A673 (cell line): ENCODE measurements at regions of chr1 and their contacts with region 1.

Region 1: DNA sequence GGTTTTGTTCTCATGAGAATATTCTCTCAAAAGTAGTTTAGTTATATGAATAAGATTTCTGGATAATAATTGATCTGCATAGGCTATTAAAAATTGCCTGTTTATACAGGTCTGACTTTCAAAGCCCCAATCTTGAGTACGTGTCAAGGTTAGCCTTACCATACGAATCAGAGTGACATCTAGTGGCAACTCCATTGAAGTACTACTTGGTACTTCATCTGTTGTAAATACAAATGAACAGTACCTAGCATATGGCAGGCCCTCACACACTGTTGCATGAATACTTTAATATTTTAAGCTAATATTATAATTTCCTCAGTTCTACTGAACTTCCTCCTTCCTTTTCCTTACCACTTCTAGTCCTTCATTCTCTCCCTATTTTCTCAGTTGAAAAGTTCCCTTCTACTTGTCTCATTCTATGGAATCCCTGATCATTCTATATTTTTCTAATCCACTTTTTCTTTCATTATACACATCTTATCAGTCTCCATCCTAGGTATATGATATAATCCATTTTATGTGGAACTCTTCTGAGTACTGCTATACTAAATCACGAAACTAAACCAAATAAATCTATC is 101.2 kb downstream of the AKT3 start:
- DNase-seq: peak; percentile 53
- H3K4me3 ChIP-seq: no peak overlapping the region
- H3K27ac ChIP-seq: no peak overlapping the region
- H3K4me1 ChIP-seq: no peaks in the 10 kb centered on the region
- H3K27me3 ChIP-seq: no peaks in the 10 kb centered on the region
- CTCF ChIP-seq: peak; percentile 59

Region 2: GRCh38 chr1:243343970-243344937 is 404.5 kb before region 1 on chr1:
- CTCF ChIA-PET with region 1: no interaction called
- POLR2A ChIA-PET with region 1: no interaction called
- intact Hi-C with region 1: loop called (anchors 5 kb)
- DNase-seq: peak; percentile 42
- H3K4me3 ChIP-seq: no peak overlapping the region
- H3K27ac ChIP-seq: no peak overlapping the region
- H3K4me1 ChIP-seq: no peaks in the 10 kb centered on the region
- H3K27me3 ChIP-seq: no peaks in the 10 kb centered on the region
- CTCF ChIP-seq: peak; percentile 59

Region 3: DNA sequence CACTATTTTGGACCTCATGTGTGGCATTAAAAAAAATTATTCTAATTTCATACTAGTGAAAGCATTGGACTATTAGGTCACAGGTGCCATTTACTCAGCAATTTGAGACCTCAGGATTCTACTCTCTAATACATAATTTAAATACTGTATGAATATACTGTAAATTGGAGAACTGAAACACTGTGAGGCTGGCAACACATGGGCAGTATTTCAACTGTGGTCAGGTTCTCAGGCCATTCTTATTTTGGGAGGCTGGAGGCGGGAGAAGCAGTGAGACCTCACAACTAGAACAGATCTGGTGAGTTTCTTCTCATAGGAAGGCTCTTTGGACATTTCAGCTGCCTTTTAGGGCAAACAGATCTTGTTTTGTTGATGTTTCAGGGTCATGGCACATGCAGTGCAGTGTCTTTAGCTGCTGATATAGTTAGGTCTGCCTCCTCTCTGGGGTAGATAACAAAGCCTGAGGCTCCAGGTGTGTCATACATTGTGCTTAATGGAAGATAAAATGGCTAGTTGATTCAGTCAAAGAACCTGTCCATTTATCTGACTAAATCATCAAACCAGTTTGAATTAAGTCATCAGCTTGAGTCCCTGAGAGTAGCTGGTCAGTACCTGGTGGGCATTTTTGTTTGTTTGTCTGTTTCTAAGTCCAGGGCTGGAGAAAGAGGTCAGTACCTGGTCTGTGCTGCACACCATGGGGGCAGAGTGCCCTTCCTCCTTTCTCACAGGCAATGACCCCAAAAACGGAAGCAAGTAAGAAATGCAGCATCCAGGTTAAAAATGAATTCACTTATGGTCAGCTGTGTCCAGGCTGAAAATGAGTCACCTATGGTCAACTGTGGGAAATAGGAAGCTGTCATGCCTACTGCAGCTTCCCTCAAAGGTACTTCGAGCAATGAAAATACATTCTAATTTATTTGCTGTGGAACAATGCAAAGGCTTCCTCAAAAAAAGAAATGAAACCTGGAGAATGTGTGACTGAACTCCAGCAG is 276.7 kb before region 1 on chr1:
- CTCF ChIA-PET with region 1: no interaction called
- POLR2A ChIA-PET with region 1: no interaction called
- intact Hi-C with region 1: loop called (anchors 10 kb)
- DNase-seq: no peak
- H3K4me3 ChIP-seq: no peak overlapping the region
- H3K27ac ChIP-seq: no peak overlapping the region
- H3K4me1 ChIP-seq: peaks cover 11% of the 10 kb centered on the region
- H3K27me3 ChIP-seq: no peaks in the 10 kb centered on the region
- CTCF ChIP-seq: no peak